SK-N-SH (cell line): ENCODE measurements at regions of chr2 and their contacts with region 1.

Region 1: DNA sequence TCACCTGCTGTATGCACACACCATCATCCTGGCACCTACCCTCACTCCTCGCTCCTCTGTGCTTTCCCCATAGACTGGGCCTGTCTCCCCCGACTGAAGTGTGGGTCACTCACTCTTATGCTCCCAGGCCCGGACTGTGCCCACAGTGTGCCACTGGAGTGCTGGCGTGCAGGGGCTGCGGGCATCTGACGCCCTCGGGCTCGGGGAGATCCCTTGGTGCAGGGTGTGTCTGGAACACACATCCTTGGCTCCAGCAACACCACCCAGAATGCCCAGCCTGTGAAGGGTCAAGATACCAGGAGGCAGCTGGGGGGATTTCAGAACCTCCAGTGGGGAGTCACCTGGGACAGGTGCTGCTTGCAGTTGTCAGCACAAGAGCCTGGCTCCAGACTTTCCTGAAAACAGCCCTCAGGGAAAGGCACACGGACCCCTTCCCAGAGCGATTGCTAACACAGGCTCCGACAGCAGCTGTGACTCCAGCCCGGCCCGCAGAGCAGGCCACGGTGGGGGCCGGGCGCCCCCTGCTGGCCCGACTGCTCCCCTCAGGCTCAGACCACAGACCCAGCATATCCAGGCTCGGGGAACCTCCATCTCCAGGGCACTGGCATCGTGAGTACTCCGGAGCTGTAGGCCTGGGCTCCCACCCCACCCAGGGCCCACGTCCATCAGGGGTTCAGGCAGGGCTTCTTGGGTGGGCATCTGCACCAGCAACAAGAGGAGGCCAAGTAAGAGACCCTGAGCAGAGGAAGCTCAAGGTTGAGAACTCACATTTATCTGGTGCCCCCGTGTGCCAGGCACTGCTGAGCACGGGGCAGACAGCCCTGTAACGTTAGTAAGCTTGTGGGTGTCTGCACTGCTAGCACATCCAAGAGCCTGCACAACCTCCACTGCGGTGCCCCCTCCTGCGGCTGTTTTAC is 8.6 kb downstream of the HS1BP3 start:
- DNase-seq: peak; percentile 99
- H3K4me3 ChIP-seq: no peak overlapping the region; a peak in 1 of 4 replicates
- H3K27ac ChIP-seq: no peak overlapping the region
- H3K4me1 ChIP-seq: peaks cover 13 to 18% of the 10 kb centered on the region in 2 experiments; a peak in 3 of 4 replicates
- H3K27me3 ChIP-seq: no peaks in the 10 kb centered on the region
- CTCF ChIP-seq: peak; percentile 98
- EP300 ChIP-seq: no peak
- RAD21 ChIP-seq: peak; percentile 96

Region 2: DNA sequence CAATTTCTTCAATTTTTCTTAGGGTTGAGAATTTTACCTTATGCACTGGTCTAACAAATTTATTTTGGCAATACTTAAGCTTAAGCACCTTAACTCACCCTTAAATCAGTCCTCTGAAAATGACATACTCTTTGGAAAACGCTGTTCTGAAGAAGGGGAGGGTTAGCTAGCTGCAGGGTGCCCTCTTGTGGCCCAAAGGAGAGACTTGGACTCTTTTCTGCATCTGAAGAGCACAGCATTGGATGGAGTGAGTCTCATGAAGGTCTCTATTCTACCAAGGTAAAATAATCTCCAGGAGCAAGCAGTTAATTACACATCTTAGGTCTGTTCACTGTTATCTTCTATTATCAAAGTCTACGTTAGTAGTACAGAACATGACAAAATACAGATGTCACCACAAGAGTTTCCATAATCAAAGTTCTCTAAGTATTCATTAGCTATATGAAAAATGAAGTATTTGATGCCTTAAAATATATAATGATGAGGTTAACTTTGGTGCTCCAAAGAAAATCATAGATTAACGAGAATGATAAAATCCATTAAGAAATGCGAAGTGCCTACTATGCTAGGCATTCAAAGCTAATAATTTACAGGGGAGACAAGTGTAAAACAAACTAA is 316.0 kb before region 1 on chr2:
- CTCF ChIA-PET with region 1: interaction called, 15 read pairs
- POLR2A ChIA-PET with region 1: no interaction called
- DNase-seq: peak; percentile 74
- H3K4me3 ChIP-seq: no peak overlapping the region
- H3K27ac ChIP-seq: peak overlapping the region; percentile 18 to 33; a peak in 2 of 4 replicates
- H3K4me1 ChIP-seq: peaks cover 0 to 7% of the 10 kb centered on the region in 2 experiments; a peak in 2 of 4 replicates
- H3K27me3 ChIP-seq: no peaks in the 10 kb centered on the region
- CTCF ChIP-seq: peak; percentile 99
- EP300 ChIP-seq: no peak
- RAD21 ChIP-seq: peak; percentile 81

Region 3: GRCh38 chr2:20378792-20379519 is 263.4 kb before region 1 on chr2:
- CTCF ChIA-PET with region 1: interaction called, 151 read pairs
- POLR2A ChIA-PET with region 1: no interaction called
- DNase-seq: peak; percentile 93
- H3K4me3 ChIP-seq: no peak overlapping the region
- H3K27ac ChIP-seq: peak overlapping the region in 1 of 2 experiments; percentile 11; a peak in 1 of 4 replicates
- H3K4me1 ChIP-seq: peaks cover 0 to 16% of the 10 kb centered on the region in 2 experiments; a peak in 1 of 4 replicates
- H3K27me3 ChIP-seq: no peaks in the 10 kb centered on the region; the same call in 1 of the 2 replicates
- CTCF ChIP-seq: peak; percentile 97
- EP300 ChIP-seq: no peak
- RAD21 ChIP-seq: peak; percentile 95

Region 4: GRCh38 chr2:20398956-20399567 is 243.3 kb before region 1 on chr2:
- CTCF ChIA-PET with region 1: interaction called, 22 read pairs
- POLR2A ChIA-PET with region 1: no interaction called
- DNase-seq: no peak
- H3K4me3 ChIP-seq: no peak overlapping the region
- H3K27ac ChIP-seq: no peak overlapping the region
- H3K4me1 ChIP-seq: no peaks in the 10 kb centered on the region; a peak in 1 of 4 replicates
- H3K27me3 ChIP-seq: no peaks in the 10 kb centered on the region
- CTCF ChIP-seq: no peak
- EP300 ChIP-seq: no peak
- RAD21 ChIP-seq: no peak

Region 5: DNA sequence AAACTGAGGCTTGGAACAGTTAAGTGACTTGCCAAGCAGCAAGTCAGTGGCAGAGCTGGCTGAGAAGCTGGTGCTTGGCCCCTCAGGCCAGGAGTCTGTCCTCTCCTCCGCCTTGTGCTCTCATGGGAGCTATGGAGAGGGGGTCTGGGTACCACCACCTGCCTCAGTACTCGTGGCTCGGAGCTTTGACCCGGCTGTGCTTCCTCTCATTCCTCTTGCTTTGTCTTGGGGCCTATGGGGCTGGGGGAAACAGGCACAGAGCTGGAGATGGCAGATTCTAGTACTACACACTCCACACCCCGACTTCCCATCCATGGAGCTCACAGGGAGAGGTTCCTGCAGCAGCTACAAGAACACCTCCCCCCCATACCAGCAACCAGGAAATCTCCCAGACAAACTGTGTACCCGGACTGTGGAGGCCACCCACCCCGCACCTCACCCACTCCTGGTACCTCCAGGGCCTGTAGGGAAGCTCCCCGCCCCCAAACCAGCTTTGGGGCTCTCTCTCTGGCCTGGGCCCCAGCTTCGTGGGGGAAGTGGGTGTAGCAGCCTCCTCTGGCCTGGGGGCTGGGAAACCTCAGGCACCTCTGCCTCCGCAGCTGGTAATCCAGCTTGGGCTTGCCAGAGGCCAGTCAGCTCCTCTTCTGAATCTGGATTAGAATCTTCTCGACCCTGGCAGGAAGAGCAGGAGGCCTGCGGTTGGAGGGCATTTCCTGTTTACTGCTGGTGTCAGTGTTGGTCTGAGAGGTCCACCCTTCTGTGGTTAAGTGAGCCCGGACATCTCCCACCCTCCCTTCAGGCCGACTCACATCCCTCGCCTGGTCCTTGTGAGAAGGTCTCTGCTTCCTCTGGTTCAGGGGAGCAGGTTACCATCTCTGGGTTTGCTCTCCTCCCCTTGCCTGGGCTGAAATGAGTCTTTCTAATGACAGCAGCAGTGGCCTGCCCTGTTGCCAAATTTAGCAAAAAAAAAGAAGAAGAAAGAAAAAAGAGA is 217.7 kb before region 1 on chr2:
- CTCF ChIA-PET with region 1: interaction called, 133 read pairs
- POLR2A ChIA-PET with region 1: no interaction called
- DNase-seq: peak; percentile 57
- H3K4me3 ChIP-seq: 0 out of 4 replicates have a peak overlapping the region, but pooled peaks of 1 of the 2 experiments have one; percentile 3
- H3K27ac ChIP-seq: peak overlapping the region; percentile 3 to 57; a peak in 3 of 4 replicates
- H3K4me1 ChIP-seq: peaks cover 25 to 32% of the 10 kb centered on the region in 2 experiments
- H3K27me3 ChIP-seq: no peaks in the 10 kb centered on the region
- CTCF ChIP-seq: no peak
- EP300 ChIP-seq: peak; percentile 35 to 78; a peak in 3 of 4 replicates
- RAD21 ChIP-seq: no peak

Region 6: GRCh38 chr2:20589975-20590703 is 52.2 kb before region 1 on chr2:
- CTCF ChIA-PET with region 1: interaction called, 107 read pairs
- POLR2A ChIA-PET with region 1: no interaction called
- DNase-seq: no peak
- H3K4me3 ChIP-seq: no peak overlapping the region
- H3K27ac ChIP-seq: no peak overlapping the region
- H3K4me1 ChIP-seq: peaks cover 9 to 18% of the 10 kb centered on the region in 2 experiments; a peak in 2 of 4 replicates
- H3K27me3 ChIP-seq: no peaks in the 10 kb centered on the region
- CTCF ChIP-seq: no peak
- EP300 ChIP-seq: no peak
- RAD21 ChIP-seq: no peak

Region 7: GRCh38 chr2:20625491-20626391 is 16.6 kb before region 1 on chr2:
- CTCF ChIA-PET with region 1: interaction called, 156 read pairs
- POLR2A ChIA-PET with region 1: no interaction called
- DNase-seq: no peak
- H3K4me3 ChIP-seq: no peak overlapping the region
- H3K27ac ChIP-seq: 0 out of 4 replicates have a peak overlapping the region, but pooled peaks of 1 of the 2 experiments have one; percentile 43
- H3K4me1 ChIP-seq: peaks cover 0 to 37% of the 10 kb centered on the region in 2 experiments; a peak in 1 of 4 replicates
- H3K27me3 ChIP-seq: no peaks in the 10 kb centered on the region
- CTCF ChIP-seq: no peak
- EP300 ChIP-seq: no peak
- RAD21 ChIP-seq: no peak

Region 8: GRCh38 chr2:21281791-21282514 is 639.6 kb after region 1 on chr2:
- CTCF ChIA-PET with region 1: no interaction called
- POLR2A ChIA-PET with region 1: no interaction called
- DNase-seq: peak; percentile 92
- H3K4me3 ChIP-seq: no peak overlapping the region
- H3K27ac ChIP-seq: peak overlapping the region; percentile 12 to 99; a peak in 2 of 4 replicates
- H3K4me1 ChIP-seq: peaks cover 0 to 67% of the 10 kb centered on the region in 2 experiments; a peak in 2 of 4 replicates
- H3K27me3 ChIP-seq: no peaks in the 10 kb centered on the region
- CTCF ChIP-seq: no peak
- EP300 ChIP-seq: no peak; a peak in 2 of 4 replicates
- RAD21 ChIP-seq: peak; percentile 52